GM12878 (cell line): ENCODE measurements at regions of chrX and their contacts with region 1.

Region 1: GRCh38 chrX:111869639-111870034 is 6.3 kb upstream of the TRPC5OS start:
- DNase-seq: peak; percentile 19
- ATAC-seq: peak; percentile 92
- H3K4me3 ChIP-seq: no peak overlapping the region
- H3K27ac ChIP-seq: no peak overlapping the region
- H3K4me1 ChIP-seq: peaks cover 6% of the 10 kb centered on the region; the same call in 1 of the 2 replicates
- H3K27me3 ChIP-seq: no peaks in the 10 kb centered on the region
- CTCF ChIP-seq: peak; percentile 65 to 76 (median 70)
- EP300 ChIP-seq: no peak
- POLR2A ChIP-seq: no peak
- RAD21 ChIP-seq: peak; percentile 76

Region 2: GRCh38 chrX:112025753-112026152 is 156.1 kb after region 1 on chrX:
- CTCF ChIA-PET with region 1: interaction called, 4 read pairs
- POLR2A ChIA-PET with region 1: no interaction called
- RAD21 ChIA-PET with region 1: no interaction called
- SMC1A ChIA-PET with region 1: no interaction called
- in situ Hi-C with region 1: no loop called
- intact Hi-C with region 1: loop called (anchors 5 kb)
- DNase-seq: peak; percentile 13
- ATAC-seq: peak; percentile 95
- H3K4me3 ChIP-seq: no peak overlapping the region
- H3K27ac ChIP-seq: no peak overlapping the region
- H3K4me1 ChIP-seq: no peaks in the 10 kb centered on the region
- H3K27me3 ChIP-seq: no peaks in the 10 kb centered on the region
- CTCF ChIP-seq: no peak
- EP300 ChIP-seq: no peak; a peak in 1 of 4 replicates
- POLR2A ChIP-seq: no peak
- RAD21 ChIP-seq: no peak

Region 3: DNA sequence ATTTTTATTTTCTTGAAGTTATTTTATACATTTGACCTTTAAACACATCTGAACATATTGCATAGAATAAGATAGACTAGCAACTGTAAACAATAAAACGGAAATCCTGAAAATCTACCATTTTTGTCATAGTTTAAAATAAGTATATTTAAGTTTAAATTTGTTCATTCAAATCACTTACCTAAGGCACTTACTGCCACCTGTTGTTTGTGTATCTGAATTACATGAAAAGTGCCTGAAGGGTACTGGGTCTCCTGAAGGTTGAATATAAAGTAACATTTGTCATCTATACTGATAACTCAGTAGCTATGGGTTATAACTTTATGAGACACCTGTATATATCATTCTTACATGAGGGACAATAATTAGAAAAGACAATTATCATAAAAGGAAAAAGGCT is 174.4 kb after region 1 on chrX:
- CTCF ChIA-PET with region 1: interaction called, 12 read pairs
- POLR2A ChIA-PET with region 1: no interaction called
- RAD21 ChIA-PET with region 1: interaction called, 8 read pairs
- SMC1A ChIA-PET with region 1: interaction called, 14 read pairs
- in situ Hi-C with region 1: no loop called
- intact Hi-C with region 1: loop called (anchors 2 kb)
- DNase-seq: no peak
- ATAC-seq: 0 out of 3 replicates have a peak, but pooled peaks have one; percentile 33
- H3K4me3 ChIP-seq: no peak overlapping the region
- H3K27ac ChIP-seq: no peak overlapping the region
- H3K4me1 ChIP-seq: no peaks in the 10 kb centered on the region
- H3K27me3 ChIP-seq: no peaks in the 10 kb centered on the region; a peak in 1 of 4 replicates
- CTCF ChIP-seq: peak; percentile 16 to 37 (median 21); a peak in 2 of 6 replicates
- EP300 ChIP-seq: no peak
- POLR2A ChIP-seq: no peak
- RAD21 ChIP-seq: peak; percentile 56

Region 4: DNA sequence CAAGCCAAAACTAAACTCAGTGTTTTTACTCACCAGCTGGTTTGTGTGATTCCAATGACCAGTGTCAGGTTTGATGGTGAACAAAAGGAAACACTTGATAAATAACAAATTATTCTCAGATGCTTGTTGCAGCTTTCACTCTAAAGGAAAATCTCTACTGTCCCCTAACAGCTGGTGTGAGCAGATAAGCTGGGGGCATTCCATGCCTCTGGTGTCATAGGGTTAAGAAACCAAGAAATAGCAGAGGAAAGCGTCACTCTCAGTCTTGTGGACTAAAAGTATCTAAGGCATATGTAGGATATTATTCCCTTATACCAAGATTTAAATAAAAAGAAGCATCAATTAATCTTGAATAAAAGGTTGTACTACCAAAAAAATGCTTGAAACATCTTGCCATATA is 188.6 kb after region 1 on chrX:
- CTCF ChIA-PET with region 1: interaction called, 10 read pairs
- POLR2A ChIA-PET with region 1: no interaction called
- RAD21 ChIA-PET with region 1: interaction called, 3 read pairs
- SMC1A ChIA-PET with region 1: interaction called, 8 read pairs
- in situ Hi-C with region 1: no loop called
- intact Hi-C with region 1: no loop called
- DNase-seq: no peak
- ATAC-seq: no peak
- H3K4me3 ChIP-seq: no peak overlapping the region
- H3K27ac ChIP-seq: no peak overlapping the region
- H3K4me1 ChIP-seq: no peaks in the 10 kb centered on the region
- H3K27me3 ChIP-seq: no peaks in the 10 kb centered on the region
- CTCF ChIP-seq: no peak
- EP300 ChIP-seq: no peak
- POLR2A ChIP-seq: no peak
- RAD21 ChIP-seq: no peak

Region 5: DNA sequence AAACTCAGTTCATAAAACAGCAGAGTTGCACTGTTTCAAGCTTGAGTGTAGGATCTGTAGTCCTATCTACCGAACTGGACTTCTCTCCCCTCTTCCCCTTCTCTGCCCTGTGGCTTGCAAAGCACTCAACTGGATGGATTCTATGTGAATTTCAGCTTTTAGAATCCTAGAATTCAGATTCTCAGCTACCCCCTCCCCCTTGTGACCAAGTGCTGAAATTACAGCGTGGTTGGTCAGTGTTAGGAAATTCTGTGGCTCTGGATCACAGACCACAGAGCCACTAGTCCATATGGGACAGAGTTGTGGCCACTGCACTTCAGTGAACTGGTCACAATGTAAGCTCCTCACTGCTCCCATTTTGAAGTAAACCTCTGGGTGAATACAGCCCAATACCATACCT is 277.6 kb after region 1 on chrX:
- CTCF ChIA-PET with region 1: interaction called, 5 read pairs
- POLR2A ChIA-PET with region 1: no interaction called
- RAD21 ChIA-PET with region 1: interaction called, 4 read pairs
- SMC1A ChIA-PET with region 1: interaction called, 3 read pairs
- in situ Hi-C with region 1: no loop called
- intact Hi-C with region 1: loop called (anchors 1 kb)
- DNase-seq: no peak
- ATAC-seq: peak; percentile 69
- H3K4me3 ChIP-seq: no peak overlapping the region
- H3K27ac ChIP-seq: no peak overlapping the region
- H3K4me1 ChIP-seq: no peaks in the 10 kb centered on the region
- H3K27me3 ChIP-seq: no peaks in the 10 kb centered on the region
- CTCF ChIP-seq: peak; percentile 47 to 65 (median 51); a peak in 5 of 6 replicates
- EP300 ChIP-seq: no peak
- POLR2A ChIP-seq: no peak
- RAD21 ChIP-seq: peak; percentile 49

Region 6: DNA sequence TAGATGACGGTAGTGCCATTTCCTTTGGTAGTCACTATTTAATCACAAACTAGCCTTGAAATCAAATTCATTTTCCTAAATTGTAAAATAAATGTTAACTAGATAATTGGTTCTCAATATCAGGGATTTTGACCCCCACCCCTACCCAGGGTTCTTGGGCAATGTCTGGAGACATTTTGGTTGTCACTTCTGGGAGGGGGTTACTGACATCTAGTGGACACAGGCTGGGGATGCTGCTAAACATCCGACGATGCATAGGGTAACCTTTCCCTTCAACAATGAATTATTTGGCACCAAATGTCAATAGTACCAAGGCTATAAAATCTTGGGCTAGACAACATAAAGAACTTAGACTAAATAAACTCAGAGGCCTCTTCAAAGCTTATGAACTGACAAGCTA is 498.7 kb after region 1 on chrX:
- CTCF ChIA-PET with region 1: interaction called, 4 read pairs
- POLR2A ChIA-PET with region 1: no interaction called
- RAD21 ChIA-PET with region 1: no interaction called
- SMC1A ChIA-PET with region 1: no interaction called
- in situ Hi-C with region 1: no loop called
- intact Hi-C with region 1: loop called (anchors 10 kb)
- DNase-seq: no peak
- ATAC-seq: peak; percentile 64
- H3K4me3 ChIP-seq: no peak overlapping the region
- H3K27ac ChIP-seq: no peak overlapping the region
- H3K4me1 ChIP-seq: no peaks in the 10 kb centered on the region
- H3K27me3 ChIP-seq: no peaks in the 10 kb centered on the region
- CTCF ChIP-seq: peak; percentile 34 to 44 (median 35); a peak in 4 of 6 replicates
- EP300 ChIP-seq: no peak
- POLR2A ChIP-seq: no peak
- RAD21 ChIP-seq: peak; percentile 41